ENCODE measurements at regions of chr15 and their contacts with region 1.

Region 1: GRCh38 chr15:78709263-78709882 is 68.4 kb upstream of the CHRNB4 start:
- DNase-seq: peak; percentile 59
- CTCF ChIP-seq: peak; percentile 87

Region 2: GRCh38 chr15:78565097-78565951 is 144.0 kb before region 1 on chr15 and contains the start of gene CHRNA5:
- in situ Hi-C with region 1: no loop called
- DNase-seq: peak; percentile 86
- CTCF ChIP-seq: no peak

Region 3: DNA sequence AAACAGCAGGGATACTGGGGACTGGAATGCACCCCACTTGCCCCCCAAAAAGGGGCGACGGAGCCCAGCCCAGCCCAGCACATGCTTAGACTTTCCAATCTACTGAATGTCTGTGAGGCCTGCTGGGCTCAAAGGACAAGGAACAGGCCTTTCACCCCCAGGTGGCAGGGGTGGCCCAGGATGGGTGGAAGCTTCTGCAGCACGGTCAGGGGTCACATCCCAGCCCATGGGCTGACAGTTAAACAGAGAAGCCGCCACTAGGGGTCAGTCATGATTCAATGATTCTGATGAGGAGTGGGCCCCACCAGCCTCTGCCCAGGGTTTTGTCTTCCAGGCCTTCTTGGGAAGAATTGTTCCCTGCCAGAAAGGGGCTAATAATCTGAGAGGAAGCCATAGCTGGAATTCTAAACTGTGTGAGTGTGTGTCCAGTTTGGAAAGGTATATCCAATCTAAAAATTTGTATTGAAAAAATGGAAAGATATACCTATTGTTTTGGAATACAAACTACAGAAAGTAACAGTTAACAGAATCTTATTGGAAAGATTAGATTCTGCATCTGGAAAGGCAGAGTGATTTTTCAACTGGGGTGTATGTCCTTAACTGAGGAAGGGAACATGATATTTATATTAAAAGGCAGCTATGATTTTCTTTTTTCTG is 70.6 kb before region 1 on chr15:
- in situ Hi-C with region 1: loop called (anchors 10 kb)
- DNase-seq: peak; percentile 80
- CTCF ChIP-seq: peak; percentile 67

Region 4: DNA sequence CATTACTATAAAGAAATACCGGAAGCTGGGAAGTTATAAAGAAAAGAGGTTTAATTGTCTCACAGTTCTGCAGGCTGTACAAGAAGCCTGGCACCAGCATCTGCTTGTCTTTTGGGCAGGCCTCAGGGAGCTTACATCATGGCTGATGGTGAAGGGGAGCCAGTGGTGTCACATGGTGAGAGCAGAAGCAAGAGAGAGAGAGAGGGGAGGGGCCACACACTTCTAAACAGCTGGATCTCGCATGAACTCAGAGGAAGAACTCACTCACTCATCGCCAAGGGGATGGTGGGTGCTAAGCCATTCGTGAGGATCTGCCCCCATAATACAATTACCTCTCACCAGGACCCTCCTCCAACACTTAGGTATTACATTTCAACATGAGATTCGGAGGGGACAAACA is 521.4 kb after region 1 on chr15:
- in situ Hi-C with region 1: no loop called
- DNase-seq: no peak
- CTCF ChIP-seq: no peak